ENCODE measurements at regions of chr15 and their contacts with region 1.

Region 1: DNA sequence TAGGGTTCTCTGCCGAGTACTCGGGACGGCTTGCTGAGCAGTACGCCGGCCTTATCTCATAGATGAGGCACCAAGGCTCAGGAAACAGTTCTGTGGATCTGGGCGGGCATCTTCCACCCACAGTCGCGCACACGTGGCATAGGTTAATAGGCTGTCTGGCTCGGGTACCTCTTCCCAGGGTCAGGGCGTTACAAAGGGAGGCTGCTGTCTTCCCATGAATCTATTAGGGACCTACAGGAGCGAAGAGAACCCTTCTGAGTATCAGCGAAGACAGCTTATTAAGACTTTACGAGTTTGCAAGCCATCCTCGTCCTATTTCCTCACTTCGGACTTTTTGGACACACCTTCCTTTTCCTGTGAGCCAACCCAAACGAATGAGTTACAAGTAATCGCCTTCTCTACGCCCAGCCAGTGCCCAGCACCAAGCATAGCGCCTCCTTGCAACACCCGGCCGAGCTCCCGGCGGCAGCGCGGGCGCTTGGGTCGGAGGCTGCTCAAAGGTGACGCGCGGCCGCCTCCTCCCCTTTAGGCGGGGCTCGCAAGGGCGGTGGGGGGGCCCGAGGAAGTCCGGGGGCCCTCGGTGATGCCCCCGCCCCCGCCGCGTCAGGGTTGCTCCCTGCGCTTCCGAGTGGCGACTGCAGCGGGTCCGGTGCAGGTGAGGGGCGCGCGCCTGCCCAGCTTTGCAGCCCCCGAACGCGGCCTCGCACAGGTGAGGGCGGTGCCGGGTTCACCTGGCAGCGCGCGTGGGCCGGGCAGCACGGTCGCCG is at the start of gene MCTP2:
- DNase-seq: peak; percentile 86
- ATAC-seq: peak; percentile 88
- H3K4me3 Mint-ChIP-seq: peak within 1 kb of the TSS; percentile 92
- H3K27ac Mint-ChIP-seq: peak within 1 kb of the TSS; percentile 94
- H3K4me1 Mint-ChIP-seq: peaks cover 67% of the 10 kb centered on the region
- H3K27me3 Mint-ChIP-seq: no peaks in the 10 kb centered on the region
- CTCF ChIP-seq: no peak
- total RNA-seq, gene MCTP2: 46.0 and 54.2 TPM in 2 replicates

Region 2: GRCh38 chr15:93920204-93920603 is 310.9 kb before region 1 on chr15:
- CTCF ChIA-PET with region 1: no interaction called
- POLR2A ChIA-PET with region 1: no interaction called
- intact Hi-C with region 1: no loop called
- DNase-seq: no peak
- ATAC-seq: no peak
- H3K4me3 Mint-ChIP-seq: no peak overlapping the region
- H3K27ac Mint-ChIP-seq: no peak overlapping the region
- H3K4me1 Mint-ChIP-seq: no peaks in the 10 kb centered on the region
- H3K27me3 Mint-ChIP-seq: no peaks in the 10 kb centered on the region
- CTCF ChIP-seq: no peak

Region 3: DNA sequence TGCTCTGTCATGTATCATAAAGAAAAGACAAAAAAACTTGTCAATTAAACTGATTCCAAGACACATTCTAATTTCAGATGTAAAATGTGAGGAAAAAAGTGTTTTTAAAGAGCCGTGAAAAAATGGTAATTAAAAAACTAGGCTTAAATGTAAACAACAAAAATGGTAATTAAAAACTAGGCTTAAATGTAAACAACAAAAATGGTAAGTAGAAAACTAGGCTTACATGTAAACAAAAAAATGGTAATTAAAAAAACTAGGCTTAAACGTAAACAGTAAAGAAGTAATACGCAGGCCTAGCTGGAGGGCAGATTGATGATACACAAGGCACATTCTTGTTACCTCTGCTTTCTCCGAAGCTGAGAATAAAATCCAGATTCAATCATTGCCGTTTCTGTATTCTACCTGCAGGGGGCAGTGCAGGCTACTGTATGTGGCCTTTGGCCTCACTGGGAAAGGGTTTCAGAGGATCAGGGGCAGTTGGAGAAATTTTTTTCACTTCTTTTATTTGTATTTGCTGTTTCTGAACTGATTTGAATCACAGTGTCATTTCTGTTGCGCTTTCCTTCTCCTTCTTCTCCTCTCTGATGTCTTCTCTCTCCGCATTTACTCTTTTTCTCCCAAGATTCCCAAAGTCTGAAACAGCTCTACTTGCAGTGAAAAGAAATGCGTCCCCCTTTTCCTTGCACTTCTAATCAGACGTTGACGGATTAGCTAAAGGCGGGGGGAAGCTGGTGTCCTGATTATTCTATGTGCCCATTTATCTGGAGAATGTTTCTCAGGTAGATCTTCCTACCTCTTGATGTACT is 66.9 kb before region 1 on chr15:
- CTCF ChIA-PET with region 1: interaction called, 33 read pairs
- POLR2A ChIA-PET with region 1: interaction called, 11 read pairs
- intact Hi-C with region 1: loop called (anchors 1 kb)
- DNase-seq: no peak
- ATAC-seq: no peak
- H3K4me3 Mint-ChIP-seq: no peak overlapping the region
- H3K27ac Mint-ChIP-seq: no peak overlapping the region
- H3K4me1 Mint-ChIP-seq: peaks cover 2% of the 10 kb centered on the region
- H3K27me3 Mint-ChIP-seq: no peaks in the 10 kb centered on the region
- CTCF ChIP-seq: peak; percentile 73

Region 4: DNA sequence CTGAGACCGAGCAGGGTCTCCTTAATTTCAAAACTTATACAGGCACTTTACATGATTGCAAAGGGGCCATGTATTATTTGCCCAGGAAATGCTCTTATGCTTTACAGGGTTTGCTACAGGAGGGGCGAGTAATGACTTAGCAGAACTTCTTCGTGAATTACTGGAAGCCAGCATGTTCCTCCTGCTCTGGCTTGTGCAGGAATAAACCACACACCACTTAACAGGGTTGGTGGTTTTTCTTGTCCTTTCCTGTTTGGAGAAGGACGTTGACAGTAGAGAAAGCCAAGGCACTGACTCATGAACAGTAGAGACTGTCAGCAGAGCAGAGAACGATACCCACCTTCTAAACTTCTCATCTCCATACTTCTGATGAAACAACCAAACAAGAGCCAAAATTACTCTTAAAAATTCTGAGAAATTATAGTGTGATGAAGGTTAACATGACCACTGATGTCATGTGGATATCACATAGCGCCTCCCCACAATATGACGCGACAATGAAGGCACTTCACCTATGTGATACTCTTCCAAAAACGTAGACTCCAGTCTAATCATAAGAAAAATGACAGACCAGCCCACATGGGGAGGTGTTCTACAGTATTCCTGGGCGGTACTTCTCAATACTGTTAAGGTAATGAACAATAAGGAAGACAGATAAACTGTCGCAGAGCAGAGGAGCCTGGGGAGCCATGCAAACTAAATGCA is 24.5 kb before region 1 on chr15:
- CTCF ChIA-PET with region 1: no interaction called
- POLR2A ChIA-PET with region 1: interaction called, 3 read pairs
- intact Hi-C with region 1: loop called (anchors 2 kb)
- DNase-seq: no peak
- ATAC-seq: peak; percentile 40
- H3K4me3 Mint-ChIP-seq: peak overlapping the region; percentile 49
- H3K27ac Mint-ChIP-seq: no peak overlapping the region
- H3K4me1 Mint-ChIP-seq: peaks cover 16% of the 10 kb centered on the region
- H3K27me3 Mint-ChIP-seq: peaks cover 13% of the 10 kb centered on the region
- CTCF ChIP-seq: no peak

Region 5: DNA sequence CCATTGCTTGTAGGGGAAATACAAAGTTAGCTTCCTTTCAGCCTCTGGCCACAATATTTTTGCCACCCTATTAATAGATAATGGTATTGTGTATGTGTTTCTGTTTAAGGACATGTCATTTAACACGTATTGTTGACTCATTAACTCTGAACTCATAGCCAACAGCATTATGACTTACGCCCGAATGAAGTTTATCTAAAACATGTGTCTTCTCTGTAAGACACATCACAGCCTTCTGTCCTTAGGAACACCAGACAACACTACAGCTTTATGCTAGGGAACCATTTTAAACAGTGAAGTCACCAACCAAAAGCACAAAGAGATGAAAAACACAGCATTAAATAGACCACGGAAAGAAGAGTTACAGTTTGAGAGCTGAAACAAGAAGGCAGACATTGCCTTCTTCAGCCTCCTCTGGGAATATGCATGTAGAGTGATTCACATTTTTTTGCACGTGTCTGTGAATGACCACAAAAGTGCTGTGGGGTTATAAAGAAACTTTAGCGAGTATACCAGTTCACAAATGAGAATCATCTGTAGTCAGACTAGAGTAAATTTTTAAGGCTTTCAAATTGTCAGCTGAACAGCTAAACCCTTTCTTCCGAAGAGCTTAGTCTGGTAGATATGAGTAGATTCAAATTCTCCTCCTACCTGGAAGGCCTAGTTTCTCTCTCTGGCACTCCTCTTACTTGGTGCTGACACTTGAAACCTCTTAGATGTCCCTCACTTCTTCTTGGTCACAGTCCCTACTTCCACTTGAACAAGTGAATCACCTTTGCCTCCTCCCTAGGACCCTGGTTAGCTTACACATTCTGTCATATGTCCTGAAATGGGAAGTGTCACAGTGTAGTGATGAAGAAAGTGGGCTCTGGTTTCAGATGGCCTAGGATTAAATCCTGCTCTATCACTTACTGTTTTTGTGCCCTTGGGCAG is 32.5 kb after region 1 on chr15:
- CTCF ChIA-PET with region 1: interaction called, 10 read pairs
- POLR2A ChIA-PET with region 1: interaction called, 15 read pairs
- intact Hi-C with region 1: loop called (anchors 1 kb)
- DNase-seq: no peak
- ATAC-seq: peak; percentile 68
- H3K4me3 Mint-ChIP-seq: peak overlapping the region; percentile 45
- H3K27ac Mint-ChIP-seq: peak overlapping the region; percentile 87
- H3K4me1 Mint-ChIP-seq: peaks cover 77% of the 10 kb centered on the region
- H3K27me3 Mint-ChIP-seq: no peaks in the 10 kb centered on the region
- CTCF ChIP-seq: no peak

Region 6: DNA sequence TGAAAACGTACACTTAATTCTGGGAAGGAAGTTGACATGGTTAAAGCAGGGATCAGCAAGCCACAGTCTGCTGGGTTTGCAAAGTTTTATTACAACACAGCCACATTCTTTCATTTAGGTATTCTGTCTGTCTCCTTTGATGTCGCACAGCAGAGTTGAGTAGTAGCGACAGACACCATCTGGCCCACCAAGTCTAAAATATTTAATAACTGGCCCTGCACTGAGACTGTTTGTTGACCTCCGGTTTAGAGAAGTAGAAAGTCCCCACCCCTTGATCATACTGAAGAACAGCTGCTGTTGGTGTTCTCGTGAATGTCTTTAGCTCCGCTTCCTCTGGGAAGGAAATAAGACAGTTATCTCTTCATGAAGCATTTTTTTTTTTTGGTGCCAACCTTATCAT is 66.4 kb after region 1 on chr15:
- CTCF ChIA-PET with region 1: interaction called, 5 read pairs
- POLR2A ChIA-PET with region 1: interaction called, 13 read pairs
- intact Hi-C with region 1: no loop called
- DNase-seq: no peak
- ATAC-seq: peak; percentile 79
- H3K4me3 Mint-ChIP-seq: peak overlapping the region; percentile 29
- H3K27ac Mint-ChIP-seq: peak overlapping the region; percentile 85
- H3K4me1 Mint-ChIP-seq: peaks cover 74% of the 10 kb centered on the region
- H3K27me3 Mint-ChIP-seq: no peaks in the 10 kb centered on the region
- CTCF ChIP-seq: no peak

Region 7: DNA sequence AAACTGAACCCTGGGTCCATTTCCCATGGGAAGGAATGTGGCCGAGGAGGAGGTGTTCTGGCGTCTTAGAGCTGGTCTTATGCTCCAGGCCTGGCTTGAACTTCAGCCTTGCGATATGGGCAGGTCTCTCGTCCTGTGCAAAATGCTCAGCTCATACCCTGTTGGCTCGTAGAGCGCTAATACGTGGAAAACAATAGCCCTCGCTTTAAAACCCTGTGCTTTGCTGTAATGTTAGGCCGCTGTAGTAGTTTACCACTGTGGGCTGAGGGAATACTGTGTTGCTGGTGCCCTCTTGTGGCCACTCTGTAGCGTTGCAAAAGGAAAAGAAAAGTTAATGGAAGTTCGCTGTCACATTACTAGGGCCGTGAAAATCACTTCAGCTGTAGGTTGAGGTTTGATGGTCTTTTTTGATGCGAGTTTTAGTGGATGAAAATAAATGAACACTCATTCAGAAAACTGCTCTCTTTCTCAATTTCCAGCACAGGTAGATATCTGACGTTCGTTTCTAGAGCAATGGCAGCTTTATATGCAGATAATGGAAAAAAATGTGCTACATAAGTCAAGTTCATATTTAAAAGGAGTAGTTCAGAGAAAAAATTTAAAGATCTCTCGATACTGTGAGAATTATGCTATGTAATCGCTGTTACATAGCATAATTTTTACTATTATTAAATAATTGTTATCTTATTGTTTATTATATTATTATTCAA is 93.1 kb after region 1 on chr15:
- CTCF ChIA-PET with region 1: interaction called, 66 read pairs
- POLR2A ChIA-PET with region 1: interaction called, 27 read pairs
- intact Hi-C with region 1: loop called (anchors 1 kb)
- DNase-seq: peak; percentile 44
- ATAC-seq: peak; percentile 92
- H3K4me3 Mint-ChIP-seq: no peak overlapping the region
- H3K27ac Mint-ChIP-seq: peak overlapping the region; percentile 25
- H3K4me1 Mint-ChIP-seq: peaks cover 19% of the 10 kb centered on the region
- H3K27me3 Mint-ChIP-seq: no peaks in the 10 kb centered on the region
- CTCF ChIP-seq: peak; percentile 75

Region 8: DNA sequence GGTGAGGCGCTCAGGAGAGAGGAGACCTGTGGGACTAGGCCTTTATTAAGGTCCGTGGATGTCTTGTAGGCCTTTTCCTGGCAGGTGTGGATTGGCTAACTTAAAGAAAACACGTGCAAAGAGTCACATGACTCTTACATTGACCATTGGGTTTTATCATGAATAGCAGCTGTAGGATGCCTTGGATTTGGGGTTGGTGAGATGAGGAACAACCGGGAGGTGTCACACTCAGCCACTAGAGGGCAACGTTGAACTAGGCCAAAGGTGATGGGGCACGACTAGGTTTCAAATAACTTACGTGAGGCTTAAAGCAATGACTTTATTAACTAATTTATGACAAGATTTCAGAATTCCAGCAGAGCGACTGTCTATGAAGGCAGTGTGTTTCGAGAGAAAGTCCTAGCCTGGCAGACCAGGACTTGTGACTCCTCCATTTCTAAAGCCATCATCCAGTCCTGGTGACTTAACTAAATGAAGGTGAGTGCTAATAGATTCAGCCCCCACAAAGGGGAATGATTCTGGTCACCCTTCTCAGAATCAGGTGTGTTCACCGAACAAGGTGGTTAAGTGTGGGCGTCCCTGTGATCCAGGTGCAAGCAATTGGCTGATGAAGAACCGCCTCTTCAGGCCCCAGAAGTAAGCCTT is 345.9 kb after region 1 on chr15:
- CTCF ChIA-PET with region 1: no interaction called
- POLR2A ChIA-PET with region 1: no interaction called
- intact Hi-C with region 1: no loop called
- DNase-seq: no peak
- ATAC-seq: no peak
- H3K4me3 Mint-ChIP-seq: no peak overlapping the region
- H3K27ac Mint-ChIP-seq: no peak overlapping the region
- H3K4me1 Mint-ChIP-seq: no peaks in the 10 kb centered on the region
- H3K27me3 Mint-ChIP-seq: peaks cover 37% of the 10 kb centered on the region
- CTCF ChIP-seq: no peak

Measured in activated B cell treated with CpG ODN at 0.5 μM for 24 hours (primary cell).